Sigmoid colon (tissue), 7 donors: ENCODE measurements at regions of chr12 and their contacts with region 1.

Region 1: DNA sequence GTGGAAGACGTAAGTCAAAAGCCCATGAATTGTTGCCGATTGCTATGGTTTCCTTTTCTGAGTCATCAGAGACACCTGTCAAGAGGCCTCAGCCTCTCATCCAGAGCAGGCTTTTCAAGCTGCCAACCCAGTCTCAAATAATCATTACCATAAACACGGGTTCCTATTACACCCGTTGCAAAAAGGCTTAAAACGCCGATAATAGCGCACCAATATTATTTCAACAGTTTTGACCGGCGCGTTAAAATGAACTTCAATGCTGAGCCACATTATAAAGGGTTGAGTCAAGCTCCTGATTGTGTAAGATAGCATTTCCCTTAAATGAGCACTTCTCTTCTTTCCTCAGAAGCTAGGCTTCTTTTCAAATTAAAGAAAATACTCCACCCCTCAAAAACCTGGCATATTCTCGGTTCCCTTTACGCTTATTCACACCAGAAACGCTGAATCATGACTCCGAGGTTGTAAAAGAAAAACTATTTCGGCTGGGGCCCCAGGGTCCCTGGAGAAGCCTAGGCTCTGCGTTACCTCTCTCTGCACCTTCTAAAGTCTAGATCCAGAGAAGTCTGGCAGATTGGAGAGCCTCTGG is 1.4 kb downstream of the TMTC1 start:
- DNase-seq: no peak
- H3K4me3 ChIP-seq: peak overlapping the region; percentile 58 to 83 (median 72)
- H3K27ac ChIP-seq: peak overlapping the region; percentile 85 to 91 (median 86)
- H3K4me1 ChIP-seq: peaks cover 0 to 33% (median 18%) of the 10 kb centered on the region in 4 donors
- H3K27me3 ChIP-seq: no peaks in the 10 kb centered on the region
- CTCF ChIP-seq: no peak
- EP300 ChIP-seq: no peak
- POLR2A ChIP-seq: no peak

Region 2: GRCh38 chr12:29552324-29552927 is 230.0 kb before region 1 on chr12:
- intact Hi-C with region 1: loop called (anchors 2 kb)
- DNase-seq: peak; percentile 74
- H3K4me3 ChIP-seq: no peak overlapping the region
- H3K27ac ChIP-seq: no peak overlapping the region
- H3K4me1 ChIP-seq: peaks cover 0 to 15% (median 0%) of the 10 kb centered on the region in 4 donors
- H3K27me3 ChIP-seq: no peaks in the 10 kb centered on the region
- CTCF ChIP-seq: peak; percentile 53 to 86 (median 76)
- EP300 ChIP-seq: no peak
- POLR2A ChIP-seq: no peak

Region 3: DNA sequence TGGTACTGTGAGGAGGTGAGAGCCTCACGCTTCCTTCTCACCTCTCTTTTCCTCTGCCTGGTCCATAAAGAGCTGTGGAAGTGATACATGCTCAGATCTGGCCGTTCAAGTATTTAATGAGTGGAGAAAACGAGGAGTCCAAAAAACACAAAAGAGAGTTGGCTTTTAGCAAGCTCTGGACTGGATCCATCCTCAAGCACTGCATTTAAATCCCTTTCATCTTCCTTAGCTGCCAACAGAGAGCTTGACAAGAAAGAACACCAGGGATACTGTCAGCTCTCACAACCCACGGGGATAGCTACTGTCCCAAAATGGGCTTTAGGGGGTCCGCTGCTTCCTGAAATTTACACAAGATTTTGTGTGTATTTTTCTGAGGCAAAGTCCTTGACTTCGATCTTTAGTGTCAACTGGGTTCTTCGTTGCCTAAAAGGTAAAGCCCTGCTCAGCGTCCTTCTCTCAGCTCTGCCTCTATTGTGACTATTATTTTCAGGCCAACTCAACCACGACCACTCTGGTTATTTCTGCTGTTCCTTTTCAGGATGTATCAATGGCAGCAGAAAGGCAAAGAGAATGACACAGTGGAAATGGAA is 119.5 kb before region 1 on chr12:
- intact Hi-C with region 1: loop called (anchors 10 kb)
- DNase-seq: no peak
- H3K4me3 ChIP-seq: no peak overlapping the region
- H3K27ac ChIP-seq: no peak overlapping the region
- H3K4me1 ChIP-seq: peaks cover 0 to 17% (median 10%) of the 10 kb centered on the region in 4 donors
- H3K27me3 ChIP-seq: no peaks in the 10 kb centered on the region
- CTCF ChIP-seq: no peak
- EP300 ChIP-seq: no peak
- POLR2A ChIP-seq: no peak

Region 4: DNA sequence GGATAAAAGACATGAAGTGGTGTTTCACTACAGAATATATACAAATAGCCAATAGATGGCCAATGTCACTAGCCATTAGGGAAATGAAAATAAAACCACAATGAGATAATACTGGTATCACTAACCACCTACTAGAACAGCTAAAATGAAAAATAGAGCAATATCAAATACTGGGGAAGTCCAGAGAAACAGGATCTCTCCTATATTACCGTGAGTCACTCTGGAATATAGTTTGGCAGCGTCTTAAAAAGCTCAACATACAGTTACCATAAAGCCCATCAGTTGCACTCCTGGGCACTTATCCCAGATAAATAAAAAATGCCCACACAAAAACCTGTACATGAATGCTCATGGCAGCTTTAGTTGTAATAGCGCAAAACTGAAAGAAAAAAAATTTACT is 100.3 kb before region 1 on chr12:
- intact Hi-C with region 1: no loop called
- DNase-seq: no peak
- H3K4me3 ChIP-seq: no peak overlapping the region
- H3K27ac ChIP-seq: no peak overlapping the region
- H3K4me1 ChIP-seq: peaks cover 0 to 10% (median 3%) of the 10 kb centered on the region in 4 donors
- H3K27me3 ChIP-seq: no peaks in the 10 kb centered on the region
- CTCF ChIP-seq: no peak
- EP300 ChIP-seq: no peak
- POLR2A ChIP-seq: no peak

Region 5: GRCh38 chr12:29709055-29709454 is 73.3 kb before region 1 on chr12:
- intact Hi-C with region 1: loop called (anchors 5 kb)
- DNase-seq: no peak
- H3K4me3 ChIP-seq: no peak overlapping the region
- H3K27ac ChIP-seq: no peak overlapping the region
- H3K4me1 ChIP-seq: peaks cover 0 to 56% (median 36%) of the 10 kb centered on the region in 4 donors
- H3K27me3 ChIP-seq: no peaks in the 10 kb centered on the region
- CTCF ChIP-seq: no peak
- EP300 ChIP-seq: no peak
- POLR2A ChIP-seq: no peak

Region 6: DNA sequence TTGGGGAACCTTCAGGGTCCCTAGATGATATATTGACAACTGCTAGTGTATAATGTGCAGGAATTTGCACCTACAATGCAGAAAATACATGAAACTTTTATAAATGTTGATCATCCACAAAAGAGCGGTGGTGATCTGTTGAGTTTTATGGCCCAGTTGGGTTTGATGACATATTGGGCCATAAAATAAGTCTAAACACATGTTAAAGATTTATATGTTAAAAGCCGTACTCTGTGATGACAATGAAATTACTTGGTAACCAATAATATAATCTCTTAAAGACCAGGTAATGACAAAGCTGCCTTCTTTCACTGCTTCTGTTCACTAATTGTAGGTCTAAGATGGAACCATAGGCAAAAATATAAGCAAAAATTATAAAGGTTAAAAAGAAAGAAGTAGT is 60.2 kb before region 1 on chr12:
- intact Hi-C with region 1: loop called (anchors 5 kb)
- DNase-seq: no peak
- H3K4me3 ChIP-seq: no peak overlapping the region
- H3K27ac ChIP-seq: peak overlapping the region in 2 of 4 donors; percentile 6 to 78
- H3K4me1 ChIP-seq: peaks cover 0 to 39% (median 21%) of the 10 kb centered on the region in 4 donors
- H3K27me3 ChIP-seq: no peaks in the 10 kb centered on the region
- CTCF ChIP-seq: no peak
- EP300 ChIP-seq: no peak
- POLR2A ChIP-seq: no peak